ENCODE measurements at regions of chr5 and their contacts with region 1.

Region 1: DNA sequence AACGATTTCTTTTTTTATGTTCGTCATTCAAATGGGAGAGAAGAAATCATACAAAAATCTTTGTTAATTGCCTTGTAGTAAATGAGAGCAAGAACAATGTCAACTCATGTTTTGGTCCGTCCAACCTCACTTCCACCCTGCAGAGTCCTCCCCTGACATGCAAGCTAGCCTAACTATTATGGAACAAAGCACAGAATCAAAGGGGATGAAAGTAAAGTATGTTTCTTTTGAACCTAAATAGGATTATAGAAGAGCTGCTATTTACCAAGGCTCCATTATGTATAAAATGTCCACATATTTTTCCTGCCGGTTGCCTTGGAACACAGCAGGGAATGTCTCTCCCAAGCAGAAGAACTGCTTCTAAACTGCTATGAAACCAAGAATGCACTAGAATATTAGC is 161.1 kb downstream of the MRPS30 start:
- DNase-seq: no peak
- H3K4me3 ChIP-seq: no peak overlapping the region
- H3K27ac ChIP-seq: no peak overlapping the region
- H3K4me1 ChIP-seq: peaks cover 10% of the 10 kb centered on the region; the same call in 1 of the 2 replicates
- H3K27me3 ChIP-seq: no peaks in the 10 kb centered on the region
- CTCF ChIP-seq: no peak

Region 2: GRCh38 chr5:44997506-44997905 is 27.7 kb after region 1 on chr5:
- CTCF ChIA-PET with region 1: interaction called, 12 read pairs
- POLR2A ChIA-PET with region 1: no interaction called
- intact Hi-C with region 1: no loop called
- DNase-seq: no peak
- H3K4me3 ChIP-seq: no peak overlapping the region
- H3K27ac ChIP-seq: no peak overlapping the region
- H3K4me1 ChIP-seq: no peaks in the 10 kb centered on the region
- H3K27me3 ChIP-seq: no peaks in the 10 kb centered on the region
- CTCF ChIP-seq: no peak

Measured in PC-9 (cell line).